ENCODE measurements at regions of chr10 and their contacts with region 1.

Region 1: DNA sequence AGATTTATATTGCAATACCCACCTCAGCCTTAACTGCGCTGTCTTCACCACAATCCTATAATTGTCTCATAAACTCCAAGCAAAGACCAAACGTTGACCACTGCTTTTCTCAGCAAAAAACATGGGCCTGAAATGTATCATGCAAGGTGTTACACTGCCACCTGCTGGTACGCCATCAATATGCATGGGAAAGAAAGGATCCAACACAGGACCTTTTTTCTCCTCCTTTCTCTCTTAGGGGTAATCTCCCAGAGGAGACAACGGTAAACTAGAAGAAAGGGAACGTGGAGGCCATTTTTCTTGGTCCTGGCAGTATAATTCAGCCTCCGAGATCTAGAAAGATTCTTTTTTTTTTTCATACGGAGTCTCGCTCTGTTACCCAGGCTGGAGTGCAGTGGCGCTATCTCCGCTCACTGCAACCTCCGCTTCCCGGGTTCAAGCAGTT is 79.1 kb upstream of the MPP7 start:
- DNase-seq: peak; percentile 71 to 92 (median 80)
- ATAC-seq: peak; percentile 98
- H3K4me3 ChIP-seq: no peak overlapping the region
- H3K4me3 Mint-ChIP-seq: no peak overlapping the region
- H3K27ac ChIP-seq: no peak overlapping the region
- H3K27ac Mint-ChIP-seq: peak overlapping the region; percentile 9
- H3K4me1 ChIP-seq: peaks cover 18% of the 10 kb centered on the region
- H3K4me1 Mint-ChIP-seq: peaks cover 41% of the 10 kb centered on the region
- H3K27me3 ChIP-seq: no peaks in the 10 kb centered on the region
- H3K27me3 Mint-ChIP-seq: no peaks in the 10 kb centered on the region
- CTCF ChIP-seq: peak; percentile 98

Region 2: GRCh38 chr10:27369880-27370279 is 1012.0 kb before region 1 on chr10:
- CTCF ChIA-PET with region 1: no interaction called
- POLR2A ChIA-PET with region 1: no interaction called
- intact Hi-C with region 1: loop called in 1 of 2 experiments (anchors 10 kb)
- DNase-seq: peak in 1 of 14 experiments; percentile 2
- ATAC-seq: no peak
- H3K4me3 ChIP-seq: no peak overlapping the region
- H3K4me3 Mint-ChIP-seq: no peak overlapping the region
- H3K27ac ChIP-seq: no peak overlapping the region
- H3K27ac Mint-ChIP-seq: no peak overlapping the region
- H3K4me1 ChIP-seq: no peaks in the 10 kb centered on the region
- H3K4me1 Mint-ChIP-seq: no peaks in the 10 kb centered on the region
- H3K27me3 ChIP-seq: no peaks in the 10 kb centered on the region
- H3K27me3 Mint-ChIP-seq: no peaks in the 10 kb centered on the region
- CTCF ChIP-seq: peak; percentile 32

Region 3: DNA sequence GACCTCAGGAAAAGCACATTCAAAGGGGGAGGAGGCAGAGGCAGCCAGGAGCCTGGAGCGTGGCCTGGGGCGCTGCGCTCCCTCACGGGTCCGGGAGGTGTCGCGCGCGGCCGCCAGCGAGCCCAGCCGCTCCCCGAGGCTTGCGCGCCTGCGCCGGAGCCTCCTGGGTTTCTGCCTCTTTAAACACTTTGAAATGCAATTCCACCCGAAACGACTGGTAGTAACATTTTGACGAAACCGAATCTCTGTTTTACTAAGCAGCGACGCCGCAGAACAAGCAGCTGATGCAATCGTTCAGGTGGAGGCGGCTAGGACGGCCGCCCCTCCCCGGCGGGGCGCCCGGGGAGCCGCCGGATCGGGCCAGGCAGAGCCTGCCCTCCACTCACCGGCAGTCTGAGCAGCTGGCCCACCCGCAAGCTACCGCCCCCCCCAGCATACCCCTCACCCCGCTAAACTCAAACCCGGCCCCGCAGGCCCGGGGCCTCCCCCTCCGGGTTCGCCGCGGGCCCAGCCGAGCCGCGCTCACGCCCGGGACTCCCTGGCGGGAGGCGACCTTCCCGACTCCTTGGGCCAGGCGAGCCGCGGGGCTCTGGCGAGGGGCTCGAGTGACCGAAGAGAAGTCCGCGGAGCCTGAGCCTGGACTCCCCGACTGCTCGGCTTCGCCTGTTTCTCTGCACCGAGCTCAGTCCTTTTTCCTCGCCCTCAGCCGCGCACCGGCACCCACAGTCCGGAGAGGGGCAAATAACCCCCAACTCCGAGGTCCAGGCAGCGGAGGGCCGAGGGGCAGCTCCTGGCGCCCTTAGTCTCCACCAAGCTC is 639.5 kb before region 1 on chr10:
- CTCF ChIA-PET with region 1: no interaction called
- POLR2A ChIA-PET with region 1: no interaction called
- intact Hi-C with region 1: loop called (anchors 2 to 5 kb)
- DNase-seq: peak; percentile 58 to 90 (median 70)
- ATAC-seq: peak; percentile 89
- H3K4me3 ChIP-seq: peak overlapping the region; percentile 54
- H3K4me3 Mint-ChIP-seq: peak overlapping the region; percentile 91
- H3K27ac ChIP-seq: no peak overlapping the region
- H3K27ac Mint-ChIP-seq: no peak overlapping the region
- H3K4me1 ChIP-seq: peaks cover 59% of the 10 kb centered on the region
- H3K4me1 Mint-ChIP-seq: peaks cover 47% of the 10 kb centered on the region
- H3K27me3 ChIP-seq: peaks cover 55 to 72% of the 10 kb centered on the region in 2 experiments
- H3K27me3 Mint-ChIP-seq: peaks cover 81% of the 10 kb centered on the region
- CTCF ChIP-seq: peak; percentile 74

Region 4: DNA sequence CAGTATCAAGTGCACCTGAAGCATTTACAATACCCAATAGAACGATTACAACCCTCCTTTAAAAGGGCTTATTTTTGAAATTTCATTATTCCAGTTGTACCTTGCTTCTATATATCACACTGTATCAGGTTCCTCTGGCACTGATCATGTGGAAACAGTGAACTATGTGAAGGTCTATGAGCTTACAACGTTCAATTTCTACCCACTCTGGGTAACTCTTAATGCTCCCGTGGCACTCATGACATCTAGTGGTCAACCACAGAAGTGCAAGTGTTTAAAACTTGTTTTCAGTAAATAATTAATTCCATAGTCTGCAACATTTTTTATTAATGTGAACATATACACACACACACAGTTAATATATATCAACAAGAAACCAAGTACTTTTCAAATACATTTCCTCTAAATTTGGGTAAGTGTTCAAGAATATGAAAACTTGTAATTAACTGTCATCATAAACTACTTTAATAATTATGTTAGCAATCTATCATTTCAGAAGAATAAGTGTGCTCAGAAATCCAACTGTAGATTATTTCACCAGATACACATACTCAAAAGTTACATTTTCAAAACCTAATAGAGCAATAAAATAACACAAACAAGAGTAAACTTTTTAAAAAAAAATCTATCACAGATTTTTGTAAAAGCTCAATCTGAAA is 140.1 kb before region 1 on chr10:
- CTCF ChIA-PET with region 1: interaction called, 13 read pairs
- POLR2A ChIA-PET with region 1: no interaction called
- intact Hi-C with region 1: loop called in 1 of 2 experiments (anchors 2 kb)
- DNase-seq: peak in 8 of 14 experiments; percentile 7 to 74 (median 36)
- ATAC-seq: peak; percentile 78
- H3K4me3 ChIP-seq: no peak overlapping the region
- H3K4me3 Mint-ChIP-seq: no peak overlapping the region
- H3K27ac ChIP-seq: no peak overlapping the region
- H3K27ac Mint-ChIP-seq: no peak overlapping the region
- H3K4me1 ChIP-seq: peaks cover 3% of the 10 kb centered on the region
- H3K4me1 Mint-ChIP-seq: peaks cover 45% of the 10 kb centered on the region
- H3K27me3 ChIP-seq: no peaks in the 10 kb centered on the region
- H3K27me3 Mint-ChIP-seq: no peaks in the 10 kb centered on the region
- CTCF ChIP-seq: peak; percentile 98

Region 5: GRCh38 chr10:28334296-28334695 is 47.6 kb before region 1 on chr10:
- CTCF ChIA-PET with region 1: interaction called, 12 read pairs
- POLR2A ChIA-PET with region 1: interaction called, 66 read pairs
- intact Hi-C with region 1: loop called in 1 of 2 experiments (anchors 1 kb)
- DNase-seq: peak in 8 of 14 experiments; percentile 17 to 97 (median 52)
- ATAC-seq: peak; percentile 68
- H3K4me3 ChIP-seq: peak overlapping the region; percentile 76
- H3K4me3 Mint-ChIP-seq: peak overlapping the region; percentile 90
- H3K27ac ChIP-seq: peak overlapping the region; percentile 97 to 99
- H3K27ac Mint-ChIP-seq: peak overlapping the region; percentile 98
- H3K4me1 ChIP-seq: peaks cover 64% of the 10 kb centered on the region
- H3K4me1 Mint-ChIP-seq: peaks cover 85% of the 10 kb centered on the region
- H3K27me3 ChIP-seq: no peaks in the 10 kb centered on the region
- H3K27me3 Mint-ChIP-seq: no peaks in the 10 kb centered on the region
- CTCF ChIP-seq: no peak